CD4-positive, alpha-beta T cell (primary cell): ENCODE measurements at regions of chr19 and their contacts with region 1.

Region 1: GRCh38 chr19:53424968-53425597 is 6.7 kb upstream of the ZNF761 start:
- DNase-seq: peak; percentile 49 to 86 (median 58)
- ATAC-seq: peak; percentile 93
- H3K4me3 ChIP-seq: no peak overlapping the region
- H3K4me3 Mint-ChIP-seq: no peak overlapping the region
- H3K27ac ChIP-seq: no peak overlapping the region
- H3K27ac Mint-ChIP-seq: no peak overlapping the region
- H3K4me1 ChIP-seq: peaks cover 3% of the 10 kb centered on the region
- H3K4me1 Mint-ChIP-seq: peaks cover 5% of the 10 kb centered on the region
- H3K27me3 ChIP-seq: no peaks in the 10 kb centered on the region
- H3K27me3 Mint-ChIP-seq: peaks cover 5% of the 10 kb centered on the region
- CTCF ChIP-seq: peak; percentile 86

Region 2: DNA sequence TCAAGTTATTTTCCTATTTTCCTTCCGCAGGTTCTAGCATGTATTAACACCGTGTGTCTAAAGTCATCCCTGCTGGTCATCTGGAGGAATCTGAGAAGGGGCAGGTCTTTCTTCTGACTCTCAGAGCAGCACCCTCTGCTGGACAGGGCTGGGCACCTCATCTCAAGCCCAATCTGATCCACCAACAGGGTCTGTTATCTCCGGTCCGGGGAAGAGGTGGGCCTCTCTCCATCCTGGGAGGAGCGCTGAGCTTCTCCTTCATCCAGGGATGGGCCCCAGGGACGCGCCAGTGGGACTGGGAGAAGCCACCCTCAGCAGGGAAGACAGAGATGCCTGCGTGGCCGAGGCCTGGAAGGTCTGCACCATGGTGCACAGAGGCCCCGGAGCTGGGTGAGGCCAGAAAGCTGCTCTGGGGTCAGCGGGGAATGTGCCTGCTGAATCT is 86.9 kb after region 1 on chr19:
- CTCF ChIA-PET with region 1: interaction called, 3 read pairs
- POLR2A ChIA-PET with region 1: no interaction called
- intact Hi-C with region 1: loop called (anchors 1 kb)
- DNase-seq: peak; percentile 18 to 75 (median 44)
- ATAC-seq: peak; percentile 72
- H3K4me3 ChIP-seq: no peak overlapping the region
- H3K4me3 Mint-ChIP-seq: no peak overlapping the region
- H3K27ac ChIP-seq: no peak overlapping the region
- H3K27ac Mint-ChIP-seq: no peak overlapping the region
- H3K4me1 ChIP-seq: peaks cover 3% of the 10 kb centered on the region
- H3K4me1 Mint-ChIP-seq: no peaks in the 10 kb centered on the region
- H3K27me3 ChIP-seq: peaks cover 0 to 1% of the 10 kb centered on the region in 2 experiments
- H3K27me3 Mint-ChIP-seq: peaks cover 11% of the 10 kb centered on the region
- CTCF ChIP-seq: peak; percentile 68

Region 3: GRCh38 chr19:53792721-53793433 is 367.8 kb after region 1 on chr19:
- CTCF ChIA-PET with region 1: interaction called, 4 read pairs
- POLR2A ChIA-PET with region 1: no interaction called
- intact Hi-C with region 1: loop called in 1 of 2 experiments (anchors 2 kb)
- DNase-seq: peak; percentile 54 to 87 (median 68)
- ATAC-seq: peak; percentile 100
- H3K4me3 ChIP-seq: no peak overlapping the region
- H3K4me3 Mint-ChIP-seq: no peak overlapping the region
- H3K27ac ChIP-seq: no peak overlapping the region
- H3K27ac Mint-ChIP-seq: no peak overlapping the region
- H3K4me1 ChIP-seq: no peaks in the 10 kb centered on the region
- H3K4me1 Mint-ChIP-seq: no peaks in the 10 kb centered on the region
- H3K27me3 ChIP-seq: no peaks in the 10 kb centered on the region
- H3K27me3 Mint-ChIP-seq: peaks cover 16% of the 10 kb centered on the region
- CTCF ChIP-seq: peak; percentile 94

Region 4: GRCh38 chr19:54029930-54030490 is 604.9 kb after region 1 on chr19:
- CTCF ChIA-PET with region 1: no interaction called
- POLR2A ChIA-PET with region 1: no interaction called
- intact Hi-C with region 1: loop called in 1 of 2 experiments (anchors 2 kb)
- DNase-seq: peak; percentile 30 to 75 (median 44)
- ATAC-seq: no peak
- H3K4me3 ChIP-seq: no peak overlapping the region
- H3K4me3 Mint-ChIP-seq: no peak overlapping the region
- H3K27ac ChIP-seq: no peak overlapping the region
- H3K27ac Mint-ChIP-seq: no peak overlapping the region
- H3K4me1 ChIP-seq: peaks cover 2% of the 10 kb centered on the region
- H3K4me1 Mint-ChIP-seq: no peaks in the 10 kb centered on the region
- H3K27me3 ChIP-seq: peaks cover 2 to 3% of the 10 kb centered on the region in 2 experiments
- H3K27me3 Mint-ChIP-seq: peaks cover 41% of the 10 kb centered on the region
- CTCF ChIP-seq: peak; percentile 50